ENCODE measurements at regions of chr9 and their contacts with region 1.

Region 1: GRCh38 chr9:68704814-68705530 is at the start of gene PIP5K1B:
- DNase-seq: peak; percentile 91
- total RNA-seq, gene PIP5K1B: 27.1 TPM

Region 2: GRCh38 chr9:68739621-68740174 is 34.7 kb after region 1 on chr9:
- intact Hi-C with region 1: loop called (anchors 5 kb)
- DNase-seq: no peak

Region 3: GRCh38 chr9:68779558-68780384 is 74.8 kb after region 1 on chr9:
- intact Hi-C with region 1: loop called (anchors 1 kb)
- DNase-seq: peak; percentile 95

Region 4: DNA sequence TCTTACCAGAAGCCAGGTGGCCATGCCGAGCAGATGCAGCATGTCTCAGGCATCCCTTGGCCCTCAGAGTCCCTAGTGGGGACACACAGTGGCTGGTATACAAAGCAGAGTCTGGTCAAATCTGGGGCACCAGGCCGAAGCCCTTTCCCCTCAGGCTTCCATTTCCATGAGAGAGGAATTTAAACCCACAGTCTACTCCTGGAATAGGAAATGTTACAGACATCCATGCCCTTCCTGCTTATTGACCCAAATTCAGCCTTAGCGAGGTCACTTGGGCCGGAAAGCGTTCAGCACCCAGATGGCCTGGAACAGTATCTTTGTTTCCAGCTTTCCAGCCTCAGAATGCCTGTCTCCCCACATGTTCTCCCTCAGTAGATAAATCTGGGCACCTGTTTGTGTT is 131.8 kb after region 1 on chr9:
- intact Hi-C with region 1: loop called (anchors 5 kb)
- DNase-seq: no peak

Region 5: GRCh38 chr9:68872026-68872501 is 167.1 kb after region 1 on chr9:
- intact Hi-C with region 1: loop called (anchors 5 kb)
- DNase-seq: peak; percentile 78

Region 6: GRCh38 chr9:68979538-68980314 is 274.8 kb after region 1 on chr9:
- intact Hi-C with region 1: loop called (anchors 5 kb)
- DNase-seq: peak; percentile 78

Region 7: DNA sequence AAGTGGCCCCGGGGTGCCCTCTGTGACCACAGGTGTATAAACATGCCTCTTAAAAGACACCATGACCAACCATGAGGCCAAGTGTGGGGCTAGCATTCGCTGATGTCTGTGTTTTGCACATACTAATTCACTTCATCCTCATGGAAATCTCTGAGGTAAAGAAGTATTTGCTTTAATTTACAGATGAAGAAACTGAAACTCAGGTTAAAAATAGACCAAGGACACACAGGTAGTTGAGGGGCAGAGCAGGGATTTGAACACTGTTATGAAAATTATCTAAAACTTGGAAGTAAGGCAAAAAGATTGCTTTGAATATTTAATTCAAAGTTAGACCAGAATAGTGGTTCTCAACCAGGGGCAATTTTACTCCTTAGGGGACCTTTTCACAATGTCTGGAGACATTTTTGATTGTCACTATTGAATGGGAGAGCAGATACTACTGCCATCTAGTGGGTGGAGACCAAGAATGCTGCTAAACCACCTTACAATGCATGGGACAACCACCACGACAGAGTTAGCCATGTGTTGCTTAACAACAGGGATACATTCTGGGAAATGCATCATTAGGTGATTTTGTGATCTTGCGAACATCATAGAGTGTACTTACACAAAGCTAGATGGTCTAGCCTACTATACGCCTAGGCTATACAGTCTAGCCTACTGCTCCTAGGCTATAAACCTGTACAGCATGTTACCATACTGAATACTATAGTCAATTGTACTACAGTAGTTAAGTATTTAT is 322.6 kb after region 1 on chr9:
- intact Hi-C with region 1: loop called (anchors 5 kb)
- DNase-seq: no peak

Measured in cardiac septum (tissue), 1 donor.